ENCODE measurements at regions of chr12 and their contacts with region 1.

Region 1: DNA sequence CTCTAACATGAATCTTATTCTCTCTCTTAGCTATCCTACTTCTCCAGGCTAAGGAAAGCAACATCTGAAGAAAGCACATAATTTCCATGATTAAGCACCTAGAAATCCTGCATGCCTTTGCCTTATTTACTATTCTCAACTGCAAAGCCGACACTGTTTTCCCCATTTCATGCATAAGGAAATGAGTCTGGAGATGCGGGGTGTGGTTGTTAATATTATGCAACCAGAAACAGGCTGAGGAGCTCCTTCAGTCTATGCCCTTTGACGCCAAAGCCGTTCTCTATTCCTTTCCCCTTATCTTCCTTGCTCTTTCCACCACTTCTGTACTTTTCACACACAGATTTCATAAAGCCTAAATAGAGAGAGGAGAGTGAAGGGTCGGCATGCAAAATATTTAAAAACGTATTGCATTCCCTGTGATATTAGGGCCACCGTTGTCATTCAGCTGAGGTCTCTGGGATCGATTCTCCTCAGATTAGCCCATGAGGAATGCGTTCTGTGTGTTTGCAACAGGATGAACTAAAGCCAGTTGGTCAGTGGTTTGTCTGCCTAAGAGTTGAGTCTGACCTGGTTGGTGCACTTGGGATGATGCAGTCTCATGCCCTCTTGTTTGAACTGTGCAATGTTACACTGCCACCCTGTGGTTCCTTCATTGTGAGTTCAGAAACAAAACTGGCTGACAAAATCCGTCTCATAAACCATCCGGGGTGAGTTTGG is 53.1 kb upstream of the PLEKHG7 start:
- DNase-seq: peak; percentile 82
- H3K4me3 ChIP-seq: no peak overlapping the region
- H3K27ac ChIP-seq: no peak overlapping the region
- H3K4me1 ChIP-seq: peaks cover 16% of the 10 kb centered on the region
- H3K27me3 ChIP-seq: no peaks in the 10 kb centered on the region
- CTCF ChIP-seq: peak; percentile 62 to 84

Region 2: GRCh38 chr12:91361864-91362263 is 1287.8 kb before region 1 on chr12:
- CTCF ChIA-PET with region 1: no interaction called
- dilution Hi-C with region 1: no loop called
- in situ Hi-C with region 1: no loop called
- intact Hi-C with region 1: loop called (anchors 1 kb)
- DNase-seq: peak; percentile 19
- H3K4me3 ChIP-seq: no peak overlapping the region
- H3K27ac ChIP-seq: no peak overlapping the region
- H3K4me1 ChIP-seq: no peaks in the 10 kb centered on the region
- H3K27me3 ChIP-seq: peaks cover 11% of the 10 kb centered on the region
- CTCF ChIP-seq: peak; percentile 54 to 62

Region 3: DNA sequence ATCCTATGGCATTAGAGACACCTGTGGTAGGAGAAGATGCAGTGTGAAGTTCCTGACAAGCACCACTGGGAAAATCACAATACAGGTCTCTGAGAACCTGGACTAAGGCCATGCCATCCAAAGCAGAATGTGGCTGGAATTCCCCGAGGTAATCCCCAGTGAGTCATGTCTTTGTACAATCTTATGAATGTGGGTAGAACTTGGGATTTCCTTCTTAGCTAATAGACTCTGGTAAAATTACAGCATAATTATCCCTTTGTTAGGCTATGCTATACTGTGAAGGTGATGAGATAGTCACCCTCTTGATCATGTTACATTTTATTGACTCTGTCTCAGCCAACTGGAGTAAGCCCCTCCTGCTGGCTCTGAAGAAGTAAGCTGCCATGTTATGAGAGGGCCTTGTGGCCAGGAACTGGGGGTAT is 1242.7 kb before region 1 on chr12:
- CTCF ChIA-PET with region 1: no interaction called
- dilution Hi-C with region 1: no loop called
- in situ Hi-C with region 1: loop called in 1 of 2 experiments (anchors 25 kb)
- intact Hi-C with region 1: no loop called
- DNase-seq: peak; percentile 100
- H3K4me3 ChIP-seq: no peak overlapping the region
- H3K27ac ChIP-seq: no peak overlapping the region
- H3K4me1 ChIP-seq: peaks cover 14% of the 10 kb centered on the region
- H3K27me3 ChIP-seq: peaks cover 1% of the 10 kb centered on the region
- CTCF ChIP-seq: peak; percentile 8 to 10

Region 4: DNA sequence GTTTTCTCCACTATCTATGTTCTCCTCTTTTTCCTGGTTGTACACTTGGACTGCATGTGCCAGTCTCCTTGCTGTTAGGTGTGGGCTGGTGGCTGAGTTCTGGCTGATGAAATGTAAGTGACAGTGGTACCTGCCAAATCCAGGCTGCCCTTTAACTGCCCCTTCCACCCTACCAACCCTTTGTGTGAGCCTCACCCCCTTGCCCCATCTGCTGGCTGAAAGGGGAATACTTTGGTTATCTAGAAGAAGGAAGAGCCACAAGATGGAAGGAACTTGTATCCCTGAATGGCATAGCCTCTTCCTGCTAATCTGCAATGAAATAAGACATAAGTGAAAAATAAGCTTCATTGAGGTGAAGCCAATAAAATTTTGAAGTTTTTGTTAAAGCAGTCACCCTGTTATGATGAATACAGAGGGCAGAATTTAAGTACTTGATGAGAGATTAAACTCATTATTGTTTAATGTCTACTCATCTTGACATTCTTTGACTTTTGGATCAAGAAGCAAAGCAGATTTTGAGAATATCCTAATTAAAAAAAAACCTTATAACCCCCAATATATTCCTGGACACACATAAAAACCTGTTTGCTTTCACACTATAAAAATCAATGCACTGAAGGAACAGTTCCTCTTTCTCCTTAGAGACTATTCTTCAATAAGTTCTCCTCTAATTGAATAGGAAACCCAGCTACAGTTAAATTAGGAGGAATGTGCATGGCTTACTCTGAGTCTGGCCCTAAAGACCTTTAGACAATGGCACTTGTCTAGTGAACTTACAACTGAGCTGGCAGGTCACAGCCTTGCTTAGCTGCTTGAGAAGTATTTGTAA is 241.4 kb before region 1 on chr12:
- CTCF ChIA-PET with region 1: interaction called, 7 read pairs
- dilution Hi-C with region 1: no loop called
- in situ Hi-C with region 1: no loop called
- intact Hi-C with region 1: loop called (anchors 5 kb)
- DNase-seq: peak; percentile 55
- H3K4me3 ChIP-seq: no peak overlapping the region
- H3K27ac ChIP-seq: no peak overlapping the region
- H3K4me1 ChIP-seq: no peaks in the 10 kb centered on the region
- H3K27me3 ChIP-seq: no peaks in the 10 kb centered on the region
- CTCF ChIP-seq: peak; percentile 66 to 75

Region 5: GRCh38 chr12:92608151-92609091 is 41.2 kb before region 1 on chr12:
- CTCF ChIA-PET with region 1: no interaction called
- dilution Hi-C with region 1: no loop called
- in situ Hi-C with region 1: no loop called
- intact Hi-C with region 1: loop called (anchors 1 kb)
- DNase-seq: peak; percentile 67
- H3K4me3 ChIP-seq: no peak overlapping the region
- H3K27ac ChIP-seq: no peak overlapping the region
- H3K4me1 ChIP-seq: peaks cover 18% of the 10 kb centered on the region
- H3K27me3 ChIP-seq: no peaks in the 10 kb centered on the region
- CTCF ChIP-seq: peak; percentile 61 to 70